Dorsolateral prefrontal cortex (tissue), 120 donors: ENCODE measurements at regions of chr18 and their contacts with region 1.

Region 1: GRCh38 chr18:47050468-47050867 is 15.0 kb upstream of the ELOA2 start:
- DNase-seq: peak in 1 of 10 donors; percentile 21
- H3K4me3 ChIP-seq: peak overlapping the region in 3 of 59 donors; percentile 9 to 29 (median 20)
- H3K27ac ChIP-seq: no peak overlapping the region
- H3K27me3 ChIP-seq: no peaks in the 10 kb centered on the region
- CTCF ChIP-seq: peak; percentile 53 to 90 (median 72)

Region 2: GRCh38 chr18:46891742-46892214 is 158.7 kb before region 1 on chr18:
- intact Hi-C with region 1: no loop called
- DNase-seq: no peak
- H3K4me3 ChIP-seq: no peak overlapping the region
- H3K27ac ChIP-seq: no peak overlapping the region
- H3K27me3 ChIP-seq: no peaks in the 10 kb centered on the region
- CTCF ChIP-seq: no peak

Region 3: DNA sequence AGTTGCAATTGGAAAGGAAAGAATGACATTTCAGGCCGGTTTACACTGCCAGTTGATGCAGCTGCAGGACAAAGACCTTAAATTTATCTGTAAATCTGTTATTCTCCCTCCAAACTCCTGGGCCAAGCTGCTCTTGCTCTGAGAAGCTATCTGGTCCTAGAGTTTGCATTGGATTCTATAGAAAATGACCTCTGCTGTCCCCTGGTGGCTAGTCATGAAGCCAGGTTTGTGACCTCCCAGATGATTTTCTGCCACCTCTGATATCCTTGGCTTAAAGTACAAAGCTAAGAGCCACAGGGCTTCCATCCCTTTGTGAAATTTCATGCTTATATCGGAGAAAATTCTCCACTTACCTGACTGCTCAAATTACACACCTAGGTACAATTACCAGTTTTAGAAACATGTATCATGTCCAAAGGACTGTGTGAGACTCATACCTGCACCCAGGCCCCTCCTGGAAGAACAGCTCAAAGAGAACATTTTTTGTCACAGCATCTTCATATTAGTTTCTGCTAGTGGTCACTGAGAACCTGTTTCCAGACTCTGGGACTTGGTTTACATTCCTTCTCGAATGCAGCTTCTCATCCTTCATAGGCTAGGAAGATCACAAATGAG is 154.5 kb after region 1 on chr18:
- intact Hi-C with region 1: loop called in 1 of 2 experiments (anchors 2 kb)
- DNase-seq: peak in 1 of 10 donors; percentile 45
- H3K4me3 ChIP-seq: no peak overlapping the region
- H3K27ac ChIP-seq: no peak overlapping the region
- H3K27me3 ChIP-seq: peaks cover 0 to 23% (median 1%) of the 10 kb centered on the region in 45 donors
- CTCF ChIP-seq: peak in 55 of 56 donors; percentile 26 to 87 (median 73)